ENCODE measurements at regions of chr6 and their contacts with region 1.

Region 1: DNA sequence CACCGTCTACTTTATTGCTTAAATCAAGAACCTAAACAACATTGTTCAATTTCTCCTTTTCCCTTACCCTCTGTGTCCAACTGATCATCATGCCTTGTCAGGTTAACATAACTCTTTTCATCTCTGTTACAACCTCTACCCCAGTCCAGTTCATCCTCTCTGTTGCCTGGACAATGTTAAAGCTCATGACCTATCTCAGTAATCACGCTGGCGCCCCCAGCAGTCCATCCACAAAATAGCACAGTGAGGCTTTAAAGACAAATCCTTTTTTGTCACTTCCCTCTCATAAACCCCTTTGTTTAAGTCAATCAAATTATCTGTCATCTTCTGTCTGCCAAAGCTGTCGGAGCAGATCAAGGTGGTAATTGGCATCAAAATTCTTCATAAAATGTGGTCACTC is 140.1 kb downstream of the QKI start:
- DNase-seq: peak; percentile 45 to 67 (median 62)
- H3K4me3 ChIP-seq: no peak overlapping the region
- H3K27ac ChIP-seq: no peak overlapping the region
- H3K4me1 ChIP-seq: peaks cover 0 to 4% (median 0%) of the 10 kb centered on the region in 4 experiments
- H3K27me3 ChIP-seq: no peaks in the 10 kb centered on the region

Region 2: GRCh38 chr6:163427498-163428254 is 127.0 kb before region 1 on chr6:
- CTCF ChIA-PET with region 1: interaction called, 42 read pairs
- POLR2A ChIA-PET with region 1: no interaction called
- DNase-seq: peak; percentile 69 to 79 (median 73)
- H3K4me3 ChIP-seq: no peak overlapping the region
- H3K27ac ChIP-seq: no peak overlapping the region
- H3K4me1 ChIP-seq: peaks cover 0 to 4% (median 1%) of the 10 kb centered on the region in 4 experiments
- H3K27me3 ChIP-seq: no peaks in the 10 kb centered on the region

Region 3: GRCh38 chr6:163529605-163530004 is 25.1 kb before region 1 on chr6:
- CTCF ChIA-PET with region 1: no interaction called
- POLR2A ChIA-PET with region 1: no interaction called
- DNase-seq: no peak
- H3K4me3 ChIP-seq: no peak overlapping the region
- H3K27ac ChIP-seq: no peak overlapping the region
- H3K4me1 ChIP-seq: peaks cover 0 to 5% (median under 1%) of the 10 kb centered on the region in 4 experiments
- H3K27me3 ChIP-seq: no peaks in the 10 kb centered on the region

Region 4: GRCh38 chr6:164303102-164303964 is 748.7 kb after region 1 on chr6:
- CTCF ChIA-PET with region 1: no interaction called
- POLR2A ChIA-PET with region 1: no interaction called
- DNase-seq: no peak
- H3K4me3 ChIP-seq: no peak overlapping the region
- H3K27ac ChIP-seq: no peak overlapping the region
- H3K4me1 ChIP-seq: no peaks in the 10 kb centered on the region
- H3K27me3 ChIP-seq: no peaks in the 10 kb centered on the region